ENCODE measurements at regions of chr9 and their contacts with region 1.

Region 1: GRCh38 chr9:133485361-133486260 is 6.7 kb upstream of the SLC2A6 start:
- DNase-seq: no peak
- H3K4me3 Mint-ChIP-seq: no peak overlapping the region
- H3K27ac Mint-ChIP-seq: no peak overlapping the region
- H3K4me1 Mint-ChIP-seq: no peaks in the 10 kb centered on the region
- H3K27me3 Mint-ChIP-seq: peaks cover 14% of the 10 kb centered on the region

Region 2: DNA sequence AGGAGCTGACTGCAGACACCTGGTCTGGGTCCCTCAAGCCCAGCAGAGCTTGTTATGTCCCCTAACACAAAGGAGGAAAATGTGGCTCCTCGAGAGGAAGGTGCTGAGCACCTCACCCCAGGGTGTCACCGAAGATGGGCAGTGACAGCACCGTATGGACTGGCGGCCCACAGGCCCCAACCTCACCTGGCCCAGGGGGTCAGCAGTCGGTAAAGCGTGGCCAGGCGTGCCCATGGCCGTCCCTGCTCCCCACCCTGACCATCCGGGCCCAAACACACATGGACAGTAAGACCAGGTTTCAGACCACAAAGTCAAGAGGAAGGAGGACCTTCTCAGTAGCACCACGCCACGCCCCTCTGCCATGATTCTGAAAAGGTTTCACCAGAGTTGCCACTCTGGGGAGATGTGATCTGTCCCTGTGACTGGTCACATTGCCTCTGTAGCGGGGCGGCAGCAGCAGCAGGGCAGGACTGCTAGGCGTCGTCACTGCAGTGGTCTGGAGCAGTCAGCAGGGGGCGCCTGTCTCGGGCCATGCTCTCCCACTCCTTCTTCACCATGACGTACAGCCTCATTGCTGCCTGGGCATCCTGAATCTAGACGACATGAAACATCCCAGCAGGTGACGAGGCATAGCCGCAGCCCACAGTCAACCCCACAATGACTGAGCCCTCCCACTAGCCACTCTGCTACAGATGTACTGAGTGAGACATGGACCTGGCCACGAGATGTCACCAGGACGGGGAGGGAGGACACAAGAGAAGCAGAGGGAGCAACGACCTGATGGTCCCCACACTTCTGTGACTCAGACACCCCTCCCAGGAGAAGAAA is 78.9 kb before region 1 on chr9:
- CTCF ChIA-PET with region 1: interaction called, 7 read pairs
- POLR2A ChIA-PET with region 1: no interaction called
- intact Hi-C with region 1: loop called (anchors 1 kb)
- DNase-seq: peak; percentile 92
- H3K4me3 Mint-ChIP-seq: no peak overlapping the region
- H3K27ac Mint-ChIP-seq: peak overlapping the region; percentile 83
- H3K4me1 Mint-ChIP-seq: peaks cover 14% of the 10 kb centered on the region
- H3K27me3 Mint-ChIP-seq: no peaks in the 10 kb centered on the region